Activated T-helper 1 cell treated with anti-CD3 and anti-CD28 coated beads, Interleukin-12 subunit alpha, Interleukin-12 subunit beta, Interleukin-2, Interleukin-4 antibody, amounts not matched to agents 30 ng/mL and 10 ng/mL and 1 ng/mL, durations not matched to agents 14 hours and 24 hours and 36 hours (primary cell): ENCODE measurements at regions of chr6 and their contacts with region 1.

Region 1: GRCh38 chr6:35452186-35453090 is at the start of gene FANCE:
- DNase-seq: peak; percentile 91
- H3K4me3 Mint-ChIP-seq: peak within 1 kb of the TSS; percentile 88
- H3K27ac Mint-ChIP-seq: peak within 1 kb of the TSS; percentile 61
- H3K4me1 Mint-ChIP-seq: peaks cover 48% of the 10 kb centered on the region
- H3K27me3 Mint-ChIP-seq: no peaks in the 10 kb centered on the region
- total RNA-seq, gene FANCE: 21.9 and 22.3 TPM in 2 replicates

Region 2: DNA sequence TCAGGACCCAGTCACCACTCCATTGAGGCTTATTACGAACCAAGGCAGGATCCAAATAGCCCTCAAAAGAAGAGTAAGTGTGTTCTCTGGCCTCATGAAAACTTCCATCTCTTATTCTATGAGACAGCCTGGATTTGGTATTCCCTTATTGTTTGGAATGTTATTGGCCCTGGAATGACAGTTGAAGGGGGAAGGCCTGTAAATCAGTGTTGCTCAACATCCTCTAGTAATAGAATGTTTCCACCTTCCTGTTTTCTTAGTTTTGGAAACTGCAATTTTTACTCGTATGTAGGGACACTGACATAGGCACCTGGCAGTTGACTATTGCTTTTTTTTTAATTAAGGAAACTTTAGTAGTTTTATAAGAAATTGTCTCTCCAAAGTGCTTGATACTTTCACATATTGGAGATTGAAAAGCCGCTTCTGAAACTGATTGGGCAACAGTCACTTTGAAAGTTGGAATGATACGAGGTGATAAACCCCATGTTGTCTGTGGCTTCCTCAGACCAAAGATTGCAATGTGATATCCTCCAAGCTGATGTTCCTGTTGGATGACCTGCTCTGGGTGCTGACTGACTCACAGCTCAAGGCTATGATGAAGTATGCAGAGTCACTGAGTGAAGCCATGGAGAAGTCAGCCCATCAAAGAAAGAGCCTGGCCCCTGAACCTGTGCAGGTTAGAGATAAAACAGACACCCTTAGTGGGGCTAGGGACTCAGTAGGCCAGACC is 617.5 kb before region 1 on chr6:
- intact Hi-C with region 1: no loop called
- DNase-seq: no peak
- H3K4me3 Mint-ChIP-seq: no peak overlapping the region
- H3K27ac Mint-ChIP-seq: no peak overlapping the region
- H3K4me1 Mint-ChIP-seq: peaks cover 10% of the 10 kb centered on the region
- H3K27me3 Mint-ChIP-seq: no peaks in the 10 kb centered on the region

Region 3: DNA sequence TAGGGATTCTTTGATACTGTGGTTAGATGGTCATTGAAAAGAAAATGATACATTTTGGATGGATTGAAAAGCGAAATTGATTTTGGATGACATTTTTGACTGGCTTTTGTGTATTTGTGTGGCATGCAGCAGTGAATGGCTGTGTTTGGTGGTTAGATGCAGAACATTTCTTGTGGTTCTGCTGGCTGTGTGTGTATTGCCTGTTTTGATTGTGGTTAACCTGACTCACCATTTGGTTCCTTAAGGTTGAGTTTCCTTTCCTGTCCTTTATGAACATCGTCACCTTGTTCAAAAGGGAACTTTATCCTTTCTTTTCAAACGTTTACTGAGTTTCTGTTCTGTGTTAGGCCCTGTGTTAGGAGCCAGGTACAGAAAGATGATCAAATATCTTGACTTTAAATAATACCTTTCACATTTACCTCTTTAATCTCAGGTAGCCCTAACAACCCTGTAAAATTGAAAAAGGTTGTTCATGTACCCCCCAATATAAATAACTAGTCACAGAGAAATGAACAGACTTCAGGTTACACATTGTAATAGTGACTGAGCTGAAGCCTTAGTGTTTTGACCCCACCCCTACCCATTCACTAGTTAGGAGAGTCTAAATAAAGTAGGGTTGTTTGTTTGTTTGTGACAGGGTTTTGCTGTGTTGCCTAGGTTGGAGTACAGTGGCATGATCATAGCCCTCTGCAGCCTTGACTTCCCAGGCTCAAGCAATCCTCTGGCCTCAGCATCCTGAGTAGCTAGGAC is 539.5 kb before region 1 on chr6:
- intact Hi-C with region 1: no loop called
- DNase-seq: peak; percentile 49
- H3K4me3 Mint-ChIP-seq: peak overlapping the region; percentile 23
- H3K27ac Mint-ChIP-seq: peak overlapping the region; percentile 66
- H3K4me1 Mint-ChIP-seq: peaks cover 29% of the 10 kb centered on the region
- H3K27me3 Mint-ChIP-seq: peaks cover 36% of the 10 kb centered on the region

Region 4: GRCh38 chr6:35259194-35259947 is 193.1 kb before region 1 on chr6 and contains the start of gene ZNF76:
- intact Hi-C with region 1: loop called (anchors 1 kb)
- DNase-seq: peak; percentile 87
- H3K4me3 Mint-ChIP-seq: peak within 1 kb of the TSS; percentile 96
- H3K27ac Mint-ChIP-seq: peak within 1 kb of the TSS; percentile 88
- H3K4me1 Mint-ChIP-seq: peaks cover 40% of the 10 kb centered on the region
- H3K27me3 Mint-ChIP-seq: no peaks in the 10 kb centered on the region
- total RNA-seq, gene ZNF76: 32.8 and 33.1 TPM in 2 replicates

Region 5: GRCh38 chr6:35327349-35328027 is 125.0 kb before region 1 on chr6:
- intact Hi-C with region 1: loop called (anchors 1 kb)
- DNase-seq: peak; percentile 59
- H3K4me3 Mint-ChIP-seq: no peak overlapping the region
- H3K27ac Mint-ChIP-seq: peak overlapping the region; percentile 27
- H3K4me1 Mint-ChIP-seq: peaks cover 16% of the 10 kb centered on the region
- H3K27me3 Mint-ChIP-seq: no peaks in the 10 kb centered on the region

Region 6: GRCh38 chr6:35368038-35368887 is 84.2 kb before region 1 on chr6:
- intact Hi-C with region 1: loop called (anchors 1 kb)
- DNase-seq: peak; percentile 20
- H3K4me3 Mint-ChIP-seq: no peak overlapping the region
- H3K27ac Mint-ChIP-seq: peak overlapping the region; percentile 50
- H3K4me1 Mint-ChIP-seq: peaks cover 56% of the 10 kb centered on the region
- H3K27me3 Mint-ChIP-seq: no peaks in the 10 kb centered on the region

Region 7: GRCh38 chr6:35468181-35468979 is 15.9 kb after region 1 on chr6 and contains the start of gene RPL10A:
- intact Hi-C with region 1: loop called (anchors 1 kb)
- DNase-seq: peak; percentile 93
- H3K4me3 Mint-ChIP-seq: peak within 1 kb of the TSS; percentile 97
- H3K27ac Mint-ChIP-seq: peak within 1 kb of the TSS; percentile 98
- H3K4me1 Mint-ChIP-seq: peaks cover 36% of the 10 kb centered on the region
- H3K27me3 Mint-ChIP-seq: no peaks in the 10 kb centered on the region
- total RNA-seq, gene RPL10A: 1,580 and 1,584 TPM in 2 replicates

Region 8: GRCh38 chr6:35485402-35485877 is 33.0 kb after region 1 on chr6:
- intact Hi-C with region 1: no loop called
- DNase-seq: no peak
- H3K4me3 Mint-ChIP-seq: no peak overlapping the region
- H3K27ac Mint-ChIP-seq: no peak overlapping the region
- H3K4me1 Mint-ChIP-seq: no peaks in the 10 kb centered on the region
- H3K27me3 Mint-ChIP-seq: peaks cover 2% of the 10 kb centered on the region

Region 9: DNA sequence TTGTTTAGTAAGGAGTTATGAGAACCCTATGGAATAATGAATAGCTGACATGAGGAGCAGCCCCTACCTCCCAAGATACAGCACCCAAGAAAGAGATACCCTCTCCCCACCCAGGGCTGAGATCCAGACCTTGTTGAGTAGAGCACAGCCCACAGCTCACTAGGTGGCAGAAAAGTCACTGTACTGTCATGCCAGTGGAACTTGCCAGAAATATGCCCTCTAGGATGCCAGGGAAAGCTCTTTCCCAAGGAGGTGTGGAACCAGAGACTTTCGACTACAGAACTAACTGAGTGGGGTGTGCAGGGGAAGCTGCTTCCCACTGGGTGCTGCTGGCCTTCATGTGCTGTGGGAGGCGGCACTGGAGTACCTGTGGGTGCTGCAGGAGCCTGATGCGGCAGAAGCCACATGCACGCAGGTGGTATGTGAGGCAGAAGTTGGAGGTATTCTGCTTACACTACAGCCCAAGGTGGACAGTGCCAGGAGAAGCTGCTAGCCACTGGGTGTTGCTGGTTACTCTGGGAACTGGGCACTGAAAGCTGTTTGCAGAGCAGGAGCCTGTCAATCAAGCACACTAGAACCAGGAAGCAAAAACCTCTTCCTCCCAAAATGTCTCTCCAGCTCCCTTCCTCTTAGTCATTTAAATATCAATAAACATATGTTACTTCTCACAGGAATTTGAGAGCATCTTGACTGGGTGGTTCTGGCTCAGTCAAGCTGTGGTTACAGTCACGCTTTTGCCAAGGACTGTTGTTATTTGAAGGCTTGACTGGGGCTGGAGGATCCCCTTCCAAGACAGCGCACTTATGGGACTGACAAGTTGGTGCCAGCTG is 302.2 kb after region 1 on chr6:
- intact Hi-C with region 1: no loop called
- DNase-seq: no peak
- H3K4me3 Mint-ChIP-seq: no peak overlapping the region
- H3K27ac Mint-ChIP-seq: no peak overlapping the region
- H3K4me1 Mint-ChIP-seq: peaks cover 17% of the 10 kb centered on the region
- H3K27me3 Mint-ChIP-seq: peaks cover 5% of the 10 kb centered on the region